ENCODE measurements at regions of chr21 and their contacts with region 1.

Region 1: GRCh38 chr21:44626262-44626661 is 631 bp upstream of the KRTAP10-9 start:
- DNase-seq: no peak
- ATAC-seq: peak in 2 of 8 donors; percentile 23 to 36
- H3K4me3 ChIP-seq: no peak overlapping the region
- H3K27ac ChIP-seq: no peak overlapping the region
- H3K4me1 ChIP-seq: peaks cover 0 to 7% (median 0%) of the 10 kb centered on the region in 9 donors
- H3K27me3 ChIP-seq: peaks cover 0 to 31% (median 0%) of the 10 kb centered on the region in 7 donors
- CTCF ChIP-seq: no peak

Region 2: GRCh38 chr21:43775795-43776430 is 850.3 kb before region 1 on chr21 and contains the start of gene CSTB:
- intact Hi-C with region 1: no loop called
- DNase-seq: peak; percentile 84 to 86
- ATAC-seq: peak; percentile 63 to 90 (median 84)
- H3K4me3 ChIP-seq: peak within 1 kb of the TSS; percentile 69 to 100 (median 94)
- H3K27ac ChIP-seq: peak within 1 kb of the TSS; percentile 77 to 98 (median 93)
- H3K4me1 ChIP-seq: peaks cover 0 to 50% (median 18%) of the 10 kb centered on the region in 9 donors
- H3K27me3 ChIP-seq: no peaks in the 10 kb centered on the region
- CTCF ChIP-seq: no peak
- total RNA-seq, gene CSTB: 33.0 to 50.2 (median 39.2) TPM

Region 3: GRCh38 chr21:44785620-44786335 is 159.5 kb after region 1 on chr21:
- intact Hi-C with region 1: loop called in 1 of 10 experiments (anchors 10 kb)
- DNase-seq: no peak
- ATAC-seq: no peak
- H3K4me3 ChIP-seq: no peak overlapping the region
- H3K27ac ChIP-seq: no peak overlapping the region
- H3K4me1 ChIP-seq: peaks cover 0 to 15% (median 4%) of the 10 kb centered on the region in 9 donors
- H3K27me3 ChIP-seq: no peaks in the 10 kb centered on the region
- CTCF ChIP-seq: no peak

Region 4: DNA sequence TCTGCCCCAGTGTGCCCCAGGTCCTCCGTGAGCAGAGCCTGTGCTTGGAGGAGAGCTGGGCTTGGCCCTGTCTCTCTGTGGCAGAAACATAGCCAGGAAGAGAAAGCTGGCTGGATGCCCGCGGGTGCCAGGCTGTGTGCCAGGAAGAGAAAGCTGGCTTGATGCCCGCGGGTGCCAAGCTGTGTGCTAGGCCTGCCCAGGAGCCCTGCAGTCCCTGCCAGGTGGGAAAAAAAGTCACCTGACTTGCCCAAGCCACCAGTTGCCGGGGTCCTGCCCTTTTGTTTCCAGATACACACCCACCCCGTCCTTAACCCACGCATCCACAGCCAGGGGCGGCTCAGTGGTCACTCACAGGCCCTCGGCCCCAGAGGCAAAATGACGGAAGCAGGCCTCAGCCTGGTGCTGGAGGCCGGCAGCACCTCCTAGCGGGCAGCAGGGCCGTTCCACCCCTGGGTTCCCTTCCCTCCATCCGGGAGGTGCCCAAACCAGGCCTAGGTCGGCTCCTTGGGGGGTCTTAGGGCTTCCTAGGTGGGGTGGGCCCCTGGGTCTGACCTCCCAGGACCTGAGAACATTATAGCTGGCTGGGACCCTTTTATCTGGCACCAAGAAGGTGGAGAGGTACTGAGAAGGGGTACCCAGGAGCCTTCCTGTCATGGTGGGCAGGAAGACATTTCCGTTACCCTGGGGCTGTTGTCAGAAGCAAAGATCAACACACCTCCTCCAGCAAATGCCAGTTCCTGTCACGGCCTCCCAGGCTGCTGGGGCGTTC is 285.3 kb after region 1 on chr21:
- intact Hi-C with region 1: no loop called
- DNase-seq: peak; percentile 72 to 81
- ATAC-seq: peak; percentile 77 to 95 (median 90)
- H3K4me3 ChIP-seq: peak overlapping the region in 1 of 10 donors; percentile 38
- H3K27ac ChIP-seq: peak overlapping the region in 5 of 10 donors; percentile 1 to 92 (median 42)
- H3K4me1 ChIP-seq: peaks cover 0 to 94% (median 12%) of the 10 kb centered on the region in 9 donors
- H3K27me3 ChIP-seq: peaks cover 0 to 3% (median 0%) of the 10 kb centered on the region in 7 donors
- CTCF ChIP-seq: peak in 5 of 9 donors; percentile 19 to 61 (median 28)